ENCODE measurements at regions of chr1 and their contacts with region 1.

Region 1: DNA sequence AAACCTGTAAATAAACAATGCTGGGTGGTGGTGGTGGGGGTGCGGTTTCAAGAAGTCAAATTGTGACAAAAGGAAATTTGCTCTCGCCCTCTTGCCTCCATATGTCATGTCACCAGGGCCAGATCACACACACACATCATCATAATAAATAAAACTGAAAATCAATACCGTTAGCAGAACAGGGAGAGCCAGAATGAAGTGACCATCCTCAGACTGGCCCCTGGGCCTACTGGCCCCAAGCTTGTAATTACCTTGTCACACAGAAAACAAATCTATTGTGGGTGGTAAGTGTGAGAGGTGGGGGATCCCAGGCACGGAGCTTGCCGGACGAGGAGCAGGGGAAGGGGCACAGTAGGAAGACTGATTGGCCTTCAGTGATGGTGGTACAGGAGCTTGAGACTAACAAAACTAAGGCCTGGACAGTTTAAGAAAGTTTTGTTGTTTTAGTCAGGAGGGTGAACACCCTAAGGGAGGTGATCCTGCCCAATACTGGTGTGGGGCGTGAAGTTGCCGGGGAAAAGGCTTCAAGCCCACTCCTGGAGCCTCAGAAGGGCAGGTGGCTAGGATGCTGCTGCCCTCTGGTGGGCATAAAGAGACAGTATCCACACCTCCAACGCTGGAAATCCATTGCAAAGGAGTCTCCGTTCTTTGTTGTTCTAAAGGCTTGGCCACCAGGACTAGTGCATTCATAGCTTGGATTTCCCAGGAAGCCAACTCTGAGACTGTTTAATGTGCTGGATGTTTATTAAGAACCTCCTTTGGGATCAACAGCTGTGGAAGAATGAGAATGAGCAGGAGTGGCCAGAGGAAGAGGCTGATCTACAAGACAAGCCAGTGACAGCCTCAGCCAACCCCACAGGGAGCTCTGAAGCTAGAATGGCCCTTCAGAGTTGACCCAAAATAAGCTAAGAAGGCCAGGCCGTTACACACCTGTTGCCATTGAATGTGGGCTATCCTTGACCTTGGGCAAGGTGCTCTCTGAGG is 8.1 kb upstream of the C1orf216 start:
- DNase-seq: no peak
- ATAC-seq: peak; percentile 94
- H3K4me3 ChIP-seq: no peak overlapping the region
- H3K27ac ChIP-seq: no peak overlapping the region
- H3K4me1 ChIP-seq: no peaks in the 10 kb centered on the region
- H3K27me3 ChIP-seq: no peaks in the 10 kb centered on the region
- CTCF ChIP-seq: peak; percentile 81 to 85 (median 84)
- EP300 ChIP-seq: no peak
- POLR2A ChIP-seq: no peak
- RAD21 ChIP-seq: peak; percentile 77

Region 2: DNA sequence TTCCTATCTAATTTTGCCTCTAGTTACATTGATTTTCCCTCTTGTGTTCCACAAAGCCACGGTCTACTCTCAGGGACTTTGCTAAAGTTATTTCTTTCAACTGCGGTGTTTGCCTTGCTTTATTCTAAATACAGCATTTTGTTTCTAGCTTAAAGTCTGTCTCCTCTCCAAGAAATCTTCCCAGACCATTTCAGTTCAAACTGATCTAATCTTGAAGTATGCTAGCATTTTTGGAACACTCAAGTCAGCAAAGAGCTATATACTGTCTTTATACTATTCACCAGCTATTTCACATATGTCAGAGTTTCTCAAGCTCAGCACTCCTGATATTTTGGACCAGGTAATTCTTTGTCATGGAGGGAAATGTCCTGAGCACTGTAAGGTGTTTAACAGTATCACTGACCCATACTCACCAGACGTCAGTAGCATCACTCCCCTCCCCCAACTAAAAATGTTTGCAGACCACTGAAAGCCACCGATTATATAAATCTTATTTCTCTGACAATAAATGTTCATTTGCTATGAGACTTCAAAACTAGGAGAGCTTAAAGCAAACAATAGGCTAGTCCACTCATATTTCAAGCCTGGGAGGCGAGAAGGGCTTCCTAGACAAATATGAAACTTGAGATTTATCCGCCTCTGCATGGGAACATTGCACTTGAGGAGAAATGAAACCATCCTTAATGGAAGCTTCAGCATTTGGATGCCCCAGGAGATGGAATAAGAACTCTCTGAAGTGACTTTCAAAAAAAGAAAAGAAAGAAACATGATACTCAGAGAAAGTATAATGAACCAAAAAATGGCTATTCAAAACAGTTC is 250.7 kb before region 1 on chr1:
- CTCF ChIA-PET with region 1: no interaction called
- POLR2A ChIA-PET with region 1: no interaction called
- RAD21 ChIA-PET with region 1: no interaction called
- SMC1A ChIA-PET with region 1: no interaction called
- in situ Hi-C with region 1: no loop called
- intact Hi-C with region 1: no loop called
- DNase-seq: no peak
- ATAC-seq: no peak
- H3K4me3 ChIP-seq: no peak overlapping the region
- H3K27ac ChIP-seq: no peak overlapping the region
- H3K4me1 ChIP-seq: no peaks in the 10 kb centered on the region
- H3K27me3 ChIP-seq: no peaks in the 10 kb centered on the region
- CTCF ChIP-seq: no peak
- EP300 ChIP-seq: no peak
- POLR2A ChIP-seq: no peak
- RAD21 ChIP-seq: no peak

Region 3: GRCh38 chr1:35564037-35564883 is 162.5 kb before region 1 on chr1:
- CTCF ChIA-PET with region 1: interaction called, 104 read pairs
- POLR2A ChIA-PET with region 1: no interaction called
- RAD21 ChIA-PET with region 1: interaction called, 19 read pairs
- SMC1A ChIA-PET with region 1: interaction called, 47 read pairs
- in situ Hi-C with region 1: no loop called
- intact Hi-C with region 1: loop called (anchors 1 kb)
- DNase-seq: no peak
- ATAC-seq: peak; percentile 88
- H3K4me3 ChIP-seq: no peak overlapping the region
- H3K27ac ChIP-seq: no peak overlapping the region
- H3K4me1 ChIP-seq: no peaks in the 10 kb centered on the region; the same call in 1 of the 2 replicates
- H3K27me3 ChIP-seq: no peaks in the 10 kb centered on the region
- CTCF ChIP-seq: peak; percentile 77 to 88 (median 82)
- EP300 ChIP-seq: no peak
- POLR2A ChIP-seq: no peak
- RAD21 ChIP-seq: peak; percentile 85

Region 4: GRCh38 chr1:35641233-35641866 is 85.4 kb before region 1 on chr1 and contains the start of gene PSMB2:
- CTCF ChIA-PET with region 1: interaction called, 14 read pairs
- POLR2A ChIA-PET with region 1: no interaction called
- RAD21 ChIA-PET with region 1: interaction called, 3 read pairs
- SMC1A ChIA-PET with region 1: interaction called, 3 read pairs
- in situ Hi-C with region 1: no loop called
- intact Hi-C with region 1: no loop called
- DNase-seq: peak; percentile 80
- ATAC-seq: peak; percentile 91
- H3K4me3 ChIP-seq: peak within 1 kb of the TSS; percentile 98
- H3K27ac ChIP-seq: peak within 1 kb of the TSS; percentile 82
- H3K4me1 ChIP-seq: no peaks in the 10 kb centered on the region; the same call in 1 of the 2 replicates
- H3K27me3 ChIP-seq: no peaks in the 10 kb centered on the region; a peak in 3 of 4 replicates
- CTCF ChIP-seq: no peak
- EP300 ChIP-seq: no peak
- POLR2A ChIP-seq: peak; percentile 98
- RAD21 ChIP-seq: no peak
- polyA plus RNA-seq, gene PSMB2: 289 to 299 TPM

Region 5: DNA sequence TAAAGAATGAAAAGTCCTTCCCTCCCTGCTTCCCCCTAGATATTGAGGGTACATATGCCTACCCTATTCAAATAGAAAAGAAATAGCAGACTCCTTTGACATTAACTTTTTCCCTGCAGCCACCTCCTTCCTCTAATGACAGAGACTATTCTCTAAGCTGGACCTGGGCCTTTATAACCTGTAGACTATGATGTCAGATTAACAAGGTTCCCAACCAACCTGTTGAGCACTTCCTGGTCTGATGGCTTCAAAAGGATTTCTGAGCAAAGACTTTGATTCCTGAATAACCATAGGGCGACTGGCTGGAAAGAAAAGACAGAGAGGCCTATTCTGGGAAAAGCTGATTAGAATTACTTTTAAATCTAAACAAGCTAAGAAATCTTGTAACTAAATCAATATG is 10.4 kb after region 1 on chr1:
- CTCF ChIA-PET with region 1: interaction called, 23 read pairs
- POLR2A ChIA-PET with region 1: interaction called, 3 read pairs
- RAD21 ChIA-PET with region 1: interaction called, 7 read pairs
- SMC1A ChIA-PET with region 1: interaction called, 14 read pairs
- in situ Hi-C with region 1: no loop called
- intact Hi-C with region 1: no loop called
- DNase-seq: no peak
- ATAC-seq: no peak
- H3K4me3 ChIP-seq: no peak overlapping the region
- H3K27ac ChIP-seq: no peak overlapping the region
- H3K4me1 ChIP-seq: peaks cover 3% of the 10 kb centered on the region; the same call in 1 of the 2 replicates
- H3K27me3 ChIP-seq: no peaks in the 10 kb centered on the region
- CTCF ChIP-seq: no peak
- EP300 ChIP-seq: no peak
- POLR2A ChIP-seq: no peak
- RAD21 ChIP-seq: no peak

Region 6: DNA sequence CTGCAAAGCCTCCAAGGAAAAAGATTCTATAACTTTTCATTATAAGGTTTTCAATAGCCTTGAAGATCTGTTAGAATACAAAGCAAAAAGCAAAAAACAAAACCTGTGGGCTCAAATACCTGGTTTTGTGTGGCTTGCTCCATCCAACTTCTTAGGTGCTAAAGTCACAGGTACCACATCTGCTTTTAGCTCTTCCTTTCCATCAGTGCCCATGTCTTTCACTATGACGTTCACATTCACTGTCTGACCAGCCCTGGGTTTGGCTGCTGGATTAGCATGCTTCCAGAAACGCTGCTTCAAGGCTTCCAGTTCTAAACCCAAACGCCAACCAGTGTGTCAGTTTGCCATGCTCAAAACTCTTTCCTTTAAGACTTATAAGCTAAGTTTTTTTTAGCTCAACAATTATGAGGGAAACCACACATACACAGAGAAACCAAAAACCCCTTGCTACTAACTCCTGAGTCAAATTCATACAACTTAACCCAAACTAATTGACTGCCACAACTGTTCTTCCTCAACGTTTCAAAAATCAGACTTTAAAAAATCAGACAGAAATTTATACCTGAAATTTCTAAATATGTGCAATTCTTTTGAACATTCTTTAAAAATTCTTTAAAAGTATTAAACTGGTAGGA is 27.0 kb after region 1 on chr1:
- CTCF ChIA-PET with region 1: interaction called, 20 read pairs
- POLR2A ChIA-PET with region 1: interaction called, 3 read pairs
- RAD21 ChIA-PET with region 1: interaction called, 3 read pairs
- SMC1A ChIA-PET with region 1: interaction called, 5 read pairs
- in situ Hi-C with region 1: no loop called
- intact Hi-C with region 1: no loop called
- DNase-seq: no peak
- ATAC-seq: peak; percentile 78
- H3K4me3 ChIP-seq: no peak overlapping the region
- H3K27ac ChIP-seq: no peak overlapping the region
- H3K4me1 ChIP-seq: peaks cover 13% of the 10 kb centered on the region
- H3K27me3 ChIP-seq: no peaks in the 10 kb centered on the region
- CTCF ChIP-seq: no peak
- EP300 ChIP-seq: no peak
- POLR2A ChIP-seq: no peak
- RAD21 ChIP-seq: no peak

Region 7: GRCh38 chr1:35777109-35777508 is 50.4 kb after region 1 on chr1:
- CTCF ChIA-PET with region 1: interaction called, 58 read pairs
- POLR2A ChIA-PET with region 1: no interaction called
- RAD21 ChIA-PET with region 1: interaction called, 5 read pairs
- SMC1A ChIA-PET with region 1: interaction called, 5 read pairs
- in situ Hi-C with region 1: no loop called
- intact Hi-C with region 1: no loop called
- DNase-seq: no peak
- ATAC-seq: peak; percentile 52
- H3K4me3 ChIP-seq: no peak overlapping the region
- H3K27ac ChIP-seq: no peak overlapping the region
- H3K4me1 ChIP-seq: peaks cover 9% of the 10 kb centered on the region
- H3K27me3 ChIP-seq: no peaks in the 10 kb centered on the region
- CTCF ChIP-seq: no peak
- EP300 ChIP-seq: no peak
- POLR2A ChIP-seq: no peak
- RAD21 ChIP-seq: no peak

Region 8: DNA sequence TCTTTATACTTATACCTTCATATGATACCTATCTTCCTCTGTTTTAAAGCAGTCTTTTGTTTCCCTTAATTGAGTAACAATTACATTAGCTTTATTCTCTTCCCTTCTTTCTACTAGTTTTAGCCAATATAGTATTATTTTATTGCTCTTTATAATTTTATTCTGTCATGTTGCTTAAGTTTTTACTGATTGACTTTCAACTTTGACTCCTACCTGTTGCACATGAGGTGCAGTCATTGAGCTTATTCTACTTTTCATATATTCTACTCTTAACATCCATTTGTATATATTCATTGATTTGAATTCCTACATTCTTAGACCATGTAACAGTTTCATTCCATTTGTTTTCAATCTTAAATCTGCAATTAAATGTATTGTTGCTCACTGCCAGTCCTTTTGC is 253.3 kb after region 1 on chr1:
- CTCF ChIA-PET with region 1: no interaction called
- POLR2A ChIA-PET with region 1: no interaction called
- RAD21 ChIA-PET with region 1: no interaction called
- SMC1A ChIA-PET with region 1: no interaction called
- in situ Hi-C with region 1: no loop called
- intact Hi-C with region 1: no loop called
- DNase-seq: no peak
- ATAC-seq: no peak
- H3K4me3 ChIP-seq: no peak overlapping the region
- H3K27ac ChIP-seq: no peak overlapping the region
- H3K4me1 ChIP-seq: no peaks in the 10 kb centered on the region
- H3K27me3 ChIP-seq: no peaks in the 10 kb centered on the region
- CTCF ChIP-seq: no peak
- EP300 ChIP-seq: no peak
- POLR2A ChIP-seq: no peak
- RAD21 ChIP-seq: no peak